B cell (primary cell): ENCODE measurements at regions of chr10 and their contacts with region 1.

Region 1: GRCh38 chr10:122953827-122954730 is at the start of gene C10orf88:
- DNase-seq: peak; percentile 99
- ATAC-seq: peak; percentile 93
- H3K4me3 ChIP-seq: peak within 1 kb of the TSS; percentile 17 to 92 (median 87)
- H3K4me3 Mint-ChIP-seq: peak within 1 kb of the TSS; percentile 87
- H3K27ac ChIP-seq: peak within 1 kb of the TSS; percentile 58 to 82
- H3K27ac Mint-ChIP-seq: peak within 1 kb of the TSS; percentile 91
- H3K4me1 ChIP-seq: peaks cover 16 to 19% of the 10 kb centered on the region in 2 donors
- H3K4me1 Mint-ChIP-seq: peaks cover 26% of the 10 kb centered on the region
- H3K27me3 ChIP-seq: no peaks in the 10 kb centered on the region
- H3K27me3 Mint-ChIP-seq: no peaks in the 10 kb centered on the region
- CTCF ChIP-seq: no peak
- total RNA-seq, gene C10orf88: 11.1 and 11.9 TPM in 2 replicates

Region 2: GRCh38 chr10:122515588-122516231 is 438.4 kb before region 1 on chr10:
- CTCF ChIA-PET with region 1: no interaction called
- POLR2A ChIA-PET with region 1: no interaction called
- intact Hi-C with region 1: no loop called
- DNase-seq: no peak
- ATAC-seq: no peak
- H3K4me3 ChIP-seq: no peak overlapping the region
- H3K4me3 Mint-ChIP-seq: no peak overlapping the region
- H3K27ac ChIP-seq: no peak overlapping the region
- H3K27ac Mint-ChIP-seq: no peak overlapping the region
- H3K4me1 ChIP-seq: no peaks in the 10 kb centered on the region
- H3K4me1 Mint-ChIP-seq: peaks cover 2% of the 10 kb centered on the region
- H3K27me3 ChIP-seq: no peaks in the 10 kb centered on the region
- H3K27me3 Mint-ChIP-seq: peaks cover 9% of the 10 kb centered on the region
- CTCF ChIP-seq: no peak

Region 3: GRCh38 chr10:122879339-122880273 is 74.5 kb before region 1 on chr10 and contains the start of gene FAM24B:
- CTCF ChIA-PET with region 1: no interaction called
- POLR2A ChIA-PET with region 1: no interaction called
- intact Hi-C with region 1: loop called (anchors 1 kb)
- DNase-seq: peak; percentile 96
- ATAC-seq: peak; percentile 84
- H3K4me3 ChIP-seq: peak within 1 kb of the TSS; percentile 49 to 83 (median 64)
- H3K4me3 Mint-ChIP-seq: peak within 1 kb of the TSS; percentile 86
- H3K27ac ChIP-seq: peak within 1 kb of the TSS; percentile 62 to 86
- H3K27ac Mint-ChIP-seq: peak within 1 kb of the TSS; percentile 92
- H3K4me1 ChIP-seq: peaks cover 12 to 17% of the 10 kb centered on the region in 2 donors
- H3K4me1 Mint-ChIP-seq: peaks cover 39% of the 10 kb centered on the region
- H3K27me3 ChIP-seq: no peaks in the 10 kb centered on the region
- H3K27me3 Mint-ChIP-seq: no peaks in the 10 kb centered on the region
- CTCF ChIP-seq: no peak
- total RNA-seq, gene FAM24B: 11.7 and 12.5 TPM in 2 replicates

Region 4: DNA sequence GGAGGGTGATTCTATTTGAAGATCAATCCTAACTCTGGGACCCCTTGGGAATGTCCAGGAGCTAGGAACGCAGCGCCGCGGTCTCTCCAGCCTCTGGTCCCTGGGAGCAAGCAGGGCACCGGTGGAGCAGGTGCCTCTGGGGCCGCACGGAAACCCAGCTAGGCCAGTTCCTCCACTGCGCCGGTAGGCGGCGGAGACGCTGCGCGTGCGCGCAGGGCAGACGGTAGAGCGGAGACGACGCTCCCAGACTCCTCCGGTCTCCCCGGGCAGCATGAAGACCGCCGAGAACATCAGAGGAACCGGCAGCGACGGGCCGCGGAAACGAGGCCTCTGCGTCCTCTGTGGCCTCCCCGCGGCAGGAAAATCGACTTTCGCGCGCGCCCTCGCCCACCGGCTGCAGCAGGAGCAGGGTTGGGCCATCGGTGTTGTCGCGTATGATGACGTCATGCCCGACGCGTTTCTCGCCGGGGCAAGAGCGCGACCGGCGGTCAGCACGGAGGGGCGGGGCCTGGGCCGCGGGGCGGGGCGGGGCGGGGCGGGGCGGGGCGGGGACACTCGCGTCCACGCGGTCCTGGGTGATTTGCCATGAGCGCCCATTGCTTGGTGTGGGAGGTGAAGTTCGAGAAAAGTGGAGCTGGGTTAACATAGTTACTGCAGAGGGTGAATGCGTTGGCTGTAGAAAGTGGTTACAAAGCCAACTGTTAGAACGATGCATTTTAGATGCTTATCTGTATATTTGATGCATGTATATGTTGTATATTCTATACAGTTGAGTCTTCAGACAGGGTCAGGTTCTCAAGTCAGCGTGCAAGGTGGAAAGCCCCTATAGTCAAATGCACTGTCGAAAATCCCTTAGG is 26.4 kb after region 1 on chr10 and contains the start of gene PSTK:
- CTCF ChIA-PET with region 1: interaction called, 19 read pairs
- POLR2A ChIA-PET with region 1: no interaction called
- intact Hi-C with region 1: loop called (anchors 1 kb)
- DNase-seq: peak; percentile 98
- ATAC-seq: peak; percentile 95
- H3K4me3 ChIP-seq: peak within 1 kb of the TSS; percentile 55 to 86 (median 64)
- H3K4me3 Mint-ChIP-seq: peak within 1 kb of the TSS; percentile 97
- H3K27ac ChIP-seq: peak within 1 kb of the TSS; percentile 81 to 89
- H3K27ac Mint-ChIP-seq: peak within 1 kb of the TSS; percentile 99
- H3K4me1 ChIP-seq: peaks cover 10 to 15% of the 10 kb centered on the region in 2 donors
- H3K4me1 Mint-ChIP-seq: peaks cover 14% of the 10 kb centered on the region
- H3K27me3 ChIP-seq: no peaks in the 10 kb centered on the region
- H3K27me3 Mint-ChIP-seq: peaks cover 5% of the 10 kb centered on the region
- CTCF ChIP-seq: peak; percentile 97
- total RNA-seq, gene PSTK: 8.2 and 8.5 TPM in 2 replicates